ENCODE measurements at regions of chr15 and their contacts with region 1.

Region 1: DNA sequence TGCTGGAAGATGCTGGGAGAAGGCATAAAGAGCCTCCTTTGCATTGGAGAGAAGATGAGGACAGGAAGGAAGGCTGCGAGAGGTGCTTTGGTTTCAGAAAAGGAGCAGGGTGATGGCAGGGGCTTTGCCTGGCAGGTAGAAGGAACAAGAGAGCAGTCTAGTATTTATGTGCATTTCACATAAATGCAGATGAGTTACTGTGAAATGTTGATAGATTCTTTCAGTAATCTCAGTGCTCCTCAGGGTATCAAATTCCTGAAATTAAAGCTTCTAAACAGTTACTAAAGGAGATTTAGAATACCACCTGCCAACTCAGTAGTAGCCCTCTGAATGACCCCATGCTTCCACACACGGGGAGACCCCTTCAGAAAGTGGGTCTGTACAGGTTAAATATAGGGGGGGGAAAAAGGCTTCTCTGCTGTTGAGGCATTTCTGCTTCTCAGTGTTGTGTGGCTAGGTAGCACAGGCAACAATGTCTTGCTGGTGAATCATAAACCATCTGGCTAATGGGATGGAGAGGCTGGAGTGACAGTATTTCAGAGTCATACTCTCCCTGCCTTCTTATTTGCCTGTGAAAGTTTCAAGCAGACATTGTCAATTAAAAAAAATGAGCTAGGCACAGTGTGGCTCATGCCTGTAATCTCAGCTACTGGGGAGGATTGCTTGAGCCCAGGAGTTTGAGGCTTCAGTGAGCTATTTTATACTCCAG is 14.3 kb upstream of the FBXL22 start:
- DNase-seq: peak; percentile 23
- ATAC-seq: no peak
- H3K4me3 ChIP-seq: no peak overlapping the region
- H3K27ac ChIP-seq: no peak overlapping the region
- H3K4me1 ChIP-seq: peaks cover 17% of the 10 kb centered on the region
- H3K27me3 ChIP-seq: no peaks in the 10 kb centered on the region
- CTCF ChIP-seq: no peak

Region 2: DNA sequence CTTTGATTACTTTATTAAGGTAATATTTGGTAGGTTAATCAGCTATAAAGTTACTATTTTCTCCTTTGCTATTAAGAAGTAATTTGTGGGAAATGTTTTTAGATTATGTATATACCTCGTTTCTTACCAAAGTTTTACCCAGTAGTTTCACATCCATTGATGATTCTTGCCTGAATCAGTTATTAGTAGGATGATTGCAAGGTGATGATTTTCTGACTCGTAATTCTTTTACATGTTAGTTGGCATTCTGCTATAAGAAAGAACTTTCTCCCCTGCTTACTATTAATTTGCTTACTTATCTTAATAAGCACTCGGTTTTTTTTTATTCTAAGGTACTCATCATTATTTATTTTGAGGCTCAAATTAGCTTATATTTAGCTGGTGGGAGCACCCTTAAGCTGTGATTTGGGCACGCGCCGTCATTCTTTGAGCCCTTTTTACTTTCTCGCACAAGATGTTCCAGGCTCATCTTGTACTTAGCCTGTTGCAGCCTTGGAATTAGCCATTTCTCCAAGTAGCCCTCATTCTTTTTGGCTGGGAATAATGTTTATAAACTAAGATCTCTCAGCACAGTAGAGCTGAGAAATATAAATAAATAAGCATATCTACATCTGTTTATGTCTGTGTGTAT is 63.2 kb before region 1 on chr15:
- CTCF ChIA-PET with region 1: no interaction called
- POLR2A ChIA-PET with region 1: interaction called, 10 read pairs
- intact Hi-C with region 1: no loop called
- DNase-seq: no peak
- ATAC-seq: no peak
- H3K4me3 ChIP-seq: no peak overlapping the region
- H3K27ac ChIP-seq: no peak overlapping the region
- H3K4me1 ChIP-seq: peaks cover 37% of the 10 kb centered on the region
- H3K27me3 ChIP-seq: no peaks in the 10 kb centered on the region
- CTCF ChIP-seq: no peak

Region 3: DNA sequence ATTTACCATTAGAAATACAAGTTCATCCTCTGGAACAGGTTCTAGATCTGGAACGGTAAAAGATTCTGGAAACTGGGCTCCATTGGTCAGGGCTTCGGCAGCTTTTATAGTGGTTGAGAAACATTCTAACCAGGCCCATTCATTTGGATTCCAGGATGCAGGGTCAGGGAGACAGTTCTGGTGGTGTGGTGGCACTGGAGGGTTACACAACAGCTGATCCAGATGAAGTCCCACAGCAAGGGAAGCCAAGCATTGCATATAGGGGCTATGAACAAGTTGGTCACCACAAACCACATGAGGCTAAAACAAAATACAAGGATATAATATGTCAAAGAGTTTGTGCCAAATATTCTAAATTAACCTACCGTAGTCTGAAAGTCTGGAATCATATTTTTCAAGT is 57.3 kb after region 1 on chr15:
- CTCF ChIA-PET with region 1: no interaction called
- POLR2A ChIA-PET with region 1: no interaction called
- intact Hi-C with region 1: no loop called
- DNase-seq: no peak
- ATAC-seq: no peak
- H3K4me3 ChIP-seq: no peak overlapping the region
- H3K27ac ChIP-seq: no peak overlapping the region
- H3K4me1 ChIP-seq: no peaks in the 10 kb centered on the region
- H3K27me3 ChIP-seq: no peaks in the 10 kb centered on the region
- CTCF ChIP-seq: no peak